ENCODE measurements at regions of chr21 and their contacts with region 1.

Region 1: DNA sequence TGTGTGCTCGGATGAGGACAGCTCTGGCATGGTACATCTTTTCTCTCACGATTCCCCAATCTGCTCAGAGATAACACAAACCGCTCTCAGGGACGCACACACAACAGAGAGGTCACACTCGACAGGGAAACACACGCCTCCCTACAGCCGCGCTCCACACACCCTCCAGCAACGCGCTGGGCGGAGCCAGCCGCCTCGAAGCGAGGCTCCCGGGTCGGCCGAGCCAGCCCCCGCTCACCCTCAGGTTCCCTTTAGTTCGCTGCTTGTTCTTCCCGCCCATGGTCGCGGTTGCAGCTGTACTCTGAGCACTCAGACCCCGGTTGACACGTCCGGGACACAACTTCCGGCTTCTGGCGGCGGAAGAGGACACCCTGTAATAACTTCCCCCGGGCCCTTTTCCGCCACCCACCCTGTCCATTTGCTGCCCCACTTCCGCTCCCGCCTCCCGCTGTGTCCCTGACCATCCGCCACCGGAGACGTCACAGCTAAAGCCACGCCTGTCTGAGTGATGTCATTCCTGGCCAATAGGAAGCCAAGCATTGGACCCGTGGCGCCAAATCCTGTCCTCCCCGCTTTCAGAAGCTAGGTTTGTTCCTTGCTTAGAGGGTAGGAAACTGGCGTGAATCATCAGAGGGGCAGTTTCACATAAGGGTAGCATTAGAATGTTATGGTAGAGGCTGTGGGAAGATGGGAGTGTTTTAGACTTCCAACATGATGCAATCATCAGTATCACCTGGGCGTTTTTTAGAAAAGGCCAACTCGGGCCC is at the start of gene LTN1:
- DNase-seq: peak; percentile 98
- H3K4me3 Mint-ChIP-seq: peak within 1 kb of the TSS; percentile 97
- H3K27ac Mint-ChIP-seq: peak within 1 kb of the TSS; percentile 97
- H3K4me1 Mint-ChIP-seq: peaks cover 47% of the 10 kb centered on the region
- H3K27me3 Mint-ChIP-seq: no peaks in the 10 kb centered on the region
- total RNA-seq, gene LTN1: 25.6 and 28.4 TPM in 2 replicates

Region 2: GRCh38 chr21:28832013-28832714 is 160.5 kb before region 1 on chr21:
- intact Hi-C with region 1: loop called (anchors 1 kb)
- DNase-seq: peak; percentile 33
- H3K4me3 Mint-ChIP-seq: peak overlapping the region; percentile 70
- H3K27ac Mint-ChIP-seq: peak overlapping the region; percentile 88
- H3K4me1 Mint-ChIP-seq: peaks cover 74% of the 10 kb centered on the region
- H3K27me3 Mint-ChIP-seq: peaks cover 2% of the 10 kb centered on the region

Region 3: GRCh38 chr21:29018540-29018939 is 25.8 kb after region 1 on chr21:
- intact Hi-C with region 1: loop called (anchors 1 kb)
- DNase-seq: no peak
- H3K4me3 Mint-ChIP-seq: peak overlapping the region; percentile 91
- H3K27ac Mint-ChIP-seq: peak overlapping the region; percentile 89
- H3K4me1 Mint-ChIP-seq: peaks cover 27% of the 10 kb centered on the region
- H3K27me3 Mint-ChIP-seq: no peaks in the 10 kb centered on the region

Region 4: DNA sequence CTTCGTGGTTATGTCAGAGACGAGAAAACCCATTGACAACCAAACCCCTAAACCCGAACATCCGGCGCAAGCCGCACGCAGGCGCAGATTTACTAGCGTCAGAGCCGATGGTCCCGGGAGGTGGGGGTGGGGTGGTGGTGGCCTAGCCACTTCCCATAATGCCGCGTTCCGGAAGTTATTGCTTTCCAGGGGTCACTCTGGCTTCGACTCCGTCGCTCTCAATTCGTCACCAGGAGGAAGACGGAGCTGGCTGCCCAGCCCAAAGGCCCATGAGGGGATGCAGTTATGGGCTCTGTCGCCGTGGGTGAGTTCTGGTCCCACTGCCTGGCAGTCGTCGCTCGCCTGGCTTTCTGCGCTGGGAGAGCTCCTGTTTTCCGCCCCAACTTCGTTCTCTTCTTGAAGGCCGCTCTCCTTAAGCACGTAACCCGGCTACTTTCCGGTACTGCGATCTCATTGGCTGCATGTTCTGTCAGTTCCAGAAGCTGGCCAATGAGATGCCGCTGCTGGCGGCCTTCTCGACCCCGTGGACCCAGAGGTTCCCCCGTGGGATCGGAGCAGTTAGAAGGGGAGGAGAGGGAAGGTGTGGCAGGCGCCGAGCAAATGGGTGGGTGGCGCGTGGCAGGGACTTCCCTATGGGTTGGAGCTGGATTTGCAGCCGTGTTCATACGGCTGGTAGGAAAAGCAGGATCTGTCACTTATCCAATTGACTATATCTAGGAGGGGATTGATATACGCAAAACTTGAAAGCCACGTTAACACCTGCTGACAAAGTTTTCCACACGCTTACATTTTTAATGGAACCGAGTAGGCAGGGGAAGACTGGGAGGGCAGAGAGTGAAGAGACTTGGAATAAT is 32.0 kb after region 1 on chr21 and contains the start of gene USP16:
- intact Hi-C with region 1: loop called (anchors 1 kb)
- DNase-seq: peak; percentile 95
- H3K4me3 Mint-ChIP-seq: peak within 1 kb of the TSS; percentile 99
- H3K27ac Mint-ChIP-seq: peak within 1 kb of the TSS; percentile 97
- H3K4me1 Mint-ChIP-seq: peaks cover 39% of the 10 kb centered on the region
- H3K27me3 Mint-ChIP-seq: no peaks in the 10 kb centered on the region
- total RNA-seq, gene USP16: 44.7 and 48.7 TPM in 2 replicates

Region 5: GRCh38 chr21:29078869-29079767 is 86.4 kb after region 1 on chr21:
- intact Hi-C with region 1: loop called (anchors 1 kb)
- DNase-seq: no peak
- H3K4me3 Mint-ChIP-seq: peak overlapping the region; percentile 86
- H3K27ac Mint-ChIP-seq: peak overlapping the region; percentile 65
- H3K4me1 Mint-ChIP-seq: peaks cover 47% of the 10 kb centered on the region
- H3K27me3 Mint-ChIP-seq: peaks cover 2% of the 10 kb centered on the region

Measured in activated T-helper 1 cell treated with anti-CD3 and anti-CD28 coated beads, Interleukin-12 subunit alpha, Interleukin-12 subunit beta, Interleukin-2, Interleukin-4 antibody, amounts not matched to agents 30 ng/mL and 10 ng/mL and 1 ng/mL, durations not matched to agents 14 hours and 24 hours and 36 hours (primary cell).